Head of caudate nucleus (tissue), 42 donors: ENCODE measurements at regions of chr4 and their contacts with region 1.

Region 1: GRCh38 chr4:113289766-113290165 is 240.3 kb downstream of the ANK2 start:
- DNase-seq: no peak

Region 2: GRCh38 chr4:112978691-112979472 is 310.9 kb before region 1 on chr4:
- intact Hi-C with region 1: no loop called
- DNase-seq: no peak

Region 3: DNA sequence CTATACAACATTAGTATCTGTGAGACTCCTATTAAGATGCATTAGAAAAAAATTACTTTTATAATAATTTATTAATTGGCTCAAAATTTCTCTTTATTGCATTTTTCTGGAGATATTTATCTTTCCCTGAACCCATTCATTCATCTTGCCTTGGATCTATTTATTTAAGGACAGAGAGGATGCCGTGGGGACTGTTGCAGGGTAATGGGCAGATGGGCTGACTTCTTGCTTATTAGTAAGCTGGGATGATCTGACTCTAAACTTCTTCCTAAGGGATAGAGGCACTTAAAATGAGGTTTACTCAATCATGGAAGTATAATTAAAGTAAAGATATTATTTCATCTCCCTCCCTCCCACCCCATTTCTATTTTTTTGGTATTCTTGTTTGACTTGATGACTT is 258.6 kb before region 1 on chr4:
- intact Hi-C with region 1: no loop called
- DNase-seq: no peak

Region 4: GRCh38 chr4:113106108-113106507 is 183.7 kb before region 1 on chr4:
- intact Hi-C with region 1: loop called (anchors 10 kb)
- DNase-seq: peak in 1 of 42 donors; percentile 53